ENCODE measurements at regions of chr2 and their contacts with region 1.

Region 1: DNA sequence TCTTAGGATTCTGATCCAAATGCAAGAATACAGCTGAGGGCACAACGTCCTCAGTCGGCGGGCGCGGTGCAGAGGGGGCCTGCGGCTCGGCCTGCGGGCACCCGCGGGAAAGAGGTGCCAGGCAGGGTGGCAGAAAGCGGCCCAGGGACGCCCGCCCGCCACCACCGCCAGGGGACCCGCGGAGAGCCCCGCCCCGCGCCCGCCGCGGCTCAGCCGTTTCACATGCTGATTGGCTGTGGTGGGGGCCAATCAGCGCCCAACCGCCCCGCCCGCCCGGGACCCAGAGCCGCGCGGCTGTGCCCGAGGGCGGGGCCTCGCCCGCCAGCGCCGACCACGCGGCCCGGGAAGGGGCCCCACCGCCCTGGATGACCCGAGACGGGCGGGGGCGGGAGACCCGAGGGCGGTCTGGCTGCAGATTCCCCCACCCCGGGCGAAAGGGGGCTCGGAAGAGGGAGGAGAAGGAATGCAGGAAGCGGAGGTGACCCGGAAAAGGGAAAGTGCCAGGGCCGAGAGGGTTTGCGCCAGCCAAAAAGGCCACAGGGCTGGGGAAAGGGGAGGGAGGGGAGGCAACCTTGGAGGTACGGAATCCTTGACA is 8.0 kb downstream of the IRS1 start:
- DNase-seq: peak; percentile 91 to 93
- ATAC-seq: peak; percentile 98

Region 2: DNA sequence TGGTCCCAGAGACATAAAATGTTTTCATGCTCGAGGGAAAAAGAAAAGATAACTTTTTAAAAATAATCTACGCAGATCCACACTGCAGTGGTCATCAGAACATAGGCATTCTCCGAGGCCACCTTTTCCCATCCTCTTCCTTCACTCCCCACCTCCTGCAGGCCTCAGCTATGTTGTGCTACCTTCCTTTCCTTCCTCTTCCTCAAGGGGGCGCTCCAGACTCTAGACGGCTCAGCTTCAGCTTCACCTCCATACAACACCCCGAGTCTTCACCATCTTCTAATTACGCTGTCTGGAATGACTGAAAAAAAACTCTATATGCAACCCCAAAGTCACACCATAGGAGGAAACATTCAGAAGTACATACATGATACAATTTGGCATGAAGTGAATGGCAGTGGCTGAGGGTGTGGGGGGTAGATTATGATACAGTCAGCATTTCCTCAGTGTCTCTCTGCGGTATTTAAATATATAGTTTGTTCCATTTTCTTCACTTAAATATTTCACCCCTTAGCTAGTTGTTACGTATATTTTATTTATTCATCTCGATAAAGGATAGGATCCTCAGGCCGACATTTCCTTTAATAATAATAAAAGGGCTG is 575.6 kb before region 1 on chr2:
- intact Hi-C with region 1: loop called in 1 of 2 experiments (anchors 10 kb)
- DNase-seq: peak; percentile 44 to 74
- ATAC-seq: peak; percentile 86

Region 3: DNA sequence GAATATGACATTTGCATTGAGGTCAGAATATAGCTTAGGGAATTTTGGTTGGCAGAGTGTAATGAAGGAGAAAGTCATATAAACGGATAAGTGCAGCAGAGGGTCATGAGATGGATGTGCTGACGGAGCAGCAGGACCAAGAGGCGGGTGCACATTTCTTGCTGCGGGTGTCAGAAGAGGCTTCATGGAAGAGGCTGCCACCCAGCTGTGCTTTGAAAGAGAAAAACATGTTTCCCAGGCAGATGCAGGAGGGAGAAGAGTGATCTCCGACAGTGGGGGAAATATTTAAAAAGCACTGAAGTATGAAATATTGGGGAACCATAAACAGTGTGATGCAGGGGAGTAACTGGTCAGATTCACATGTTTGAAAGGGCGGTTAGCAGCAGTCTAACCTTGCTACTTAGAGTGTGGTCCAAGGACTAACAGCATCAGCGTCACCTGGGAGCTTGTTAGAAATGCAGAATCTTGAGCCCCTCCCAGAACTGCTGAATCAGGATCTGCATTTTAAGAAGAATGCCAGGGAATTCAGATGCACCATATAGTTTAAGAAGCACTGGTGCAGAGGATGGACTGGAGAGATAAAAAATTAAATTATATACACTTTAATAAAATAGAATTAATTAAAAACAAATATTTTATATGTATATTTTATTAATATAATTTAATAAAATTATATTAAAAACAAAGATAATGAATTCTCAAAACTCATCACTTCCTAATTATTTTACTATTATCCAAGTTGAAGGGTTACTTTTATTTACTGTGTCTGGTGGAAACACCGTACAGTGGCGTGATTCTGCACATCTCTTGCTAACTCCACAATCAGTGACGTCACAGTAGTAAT is 632.3 kb after region 1 on chr2:
- intact Hi-C with region 1: no loop called
- DNase-seq: no peak
- ATAC-seq: no peak